ENCODE measurements at regions of chr3 and their contacts with region 1.

Region 1: DNA sequence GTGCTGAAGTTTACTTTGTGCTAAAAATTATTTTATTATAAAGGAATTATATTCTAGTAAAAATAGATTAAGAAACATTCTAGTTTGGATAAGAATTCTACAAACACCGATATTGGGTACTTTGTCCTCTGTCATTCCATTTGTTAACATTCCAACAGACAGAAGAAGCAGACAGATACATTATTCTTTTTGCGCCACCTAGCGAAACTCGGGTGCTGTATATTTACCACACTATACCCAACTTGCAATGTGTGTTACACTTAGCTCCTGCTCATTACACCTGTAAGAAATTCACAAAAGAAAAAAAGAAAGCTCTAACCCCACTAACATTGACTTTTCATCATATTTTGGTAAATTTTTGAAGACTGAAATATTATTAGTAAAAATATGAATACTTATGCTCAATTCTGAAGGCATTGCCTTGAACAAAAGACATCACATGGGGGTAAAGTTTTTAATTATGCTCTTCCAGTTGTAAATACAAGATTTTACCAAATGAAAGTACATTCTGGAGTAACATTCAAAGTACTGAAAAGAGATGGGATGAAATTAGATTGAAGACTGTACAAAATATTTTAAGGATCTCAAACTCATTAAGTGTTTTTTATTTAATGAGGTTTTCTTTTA is 136.5 kb upstream of the MLF1 start:
- DNase-seq: peak; percentile 60
- ATAC-seq: peak; percentile 79
- H3K4me3 ChIP-seq: no peak overlapping the region
- H3K27ac ChIP-seq: no peak overlapping the region
- H3K4me1 ChIP-seq: no peaks in the 10 kb centered on the region
- H3K27me3 ChIP-seq: no peaks in the 10 kb centered on the region
- CTCF ChIP-seq: peak; percentile 78
- POLR2A ChIP-seq: no peak
- RAD21 ChIP-seq: peak; percentile 74

Region 2: GRCh38 chr3:158091531-158091930 is 343.0 kb before region 1 on chr3:
- CTCF ChIA-PET with region 1: interaction called, 4 read pairs
- POLR2A ChIA-PET with region 1: no interaction called
- dilution Hi-C with region 1: no loop called
- in situ Hi-C with region 1: no loop called
- intact Hi-C with region 1: loop called (anchors 2 kb)
- DNase-seq: peak; percentile 49
- ATAC-seq: peak; percentile 71
- H3K4me3 ChIP-seq: no peak overlapping the region
- H3K27ac ChIP-seq: no peak overlapping the region
- H3K4me1 ChIP-seq: no peaks in the 10 kb centered on the region
- H3K27me3 ChIP-seq: peaks cover 33% of the 10 kb centered on the region
- CTCF ChIP-seq: peak; percentile 45
- POLR2A ChIP-seq: no peak
- RAD21 ChIP-seq: peak; percentile 49